Activated CD4-positive, alpha-beta memory T cell treated with anti-CD3 and anti-CD28 coated beads for 36 hours (primary cell): ENCODE measurements at regions of chr1 and their contacts with region 1.

Region 1: DNA sequence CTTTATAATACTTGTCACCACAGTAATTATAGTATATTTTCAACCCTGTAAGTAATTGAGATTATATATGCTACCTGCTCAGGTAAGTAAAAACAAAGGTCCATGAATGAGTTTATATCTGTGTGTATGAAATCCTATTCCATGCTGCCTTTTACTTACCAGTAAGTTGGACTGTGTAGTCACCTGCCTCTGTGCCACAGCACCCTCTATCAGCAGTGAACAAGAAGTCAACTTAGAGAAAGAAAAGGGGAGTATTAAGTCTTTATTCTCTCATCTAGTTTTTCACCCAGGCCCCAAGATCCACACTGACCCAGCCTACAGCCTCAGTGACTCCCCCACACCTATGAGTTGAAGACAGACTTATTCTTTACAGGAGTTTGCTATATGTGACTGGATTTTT is 36.9 kb upstream of the IFI16 start:
- DNase-seq: peak; percentile 37
- H3K4me3 Mint-ChIP-seq: no peak overlapping the region
- H3K27ac Mint-ChIP-seq: no peak overlapping the region
- H3K4me1 Mint-ChIP-seq: peaks cover 43% of the 10 kb centered on the region
- H3K27me3 Mint-ChIP-seq: no peaks in the 10 kb centered on the region

Region 2: GRCh38 chr1:158728510-158729225 is 244.2 kb before region 1 on chr1:
- CTCF ChIA-PET with region 1: no interaction called
- POLR2A ChIA-PET with region 1: no interaction called
- intact Hi-C with region 1: no loop called
- DNase-seq: no peak
- H3K4me3 Mint-ChIP-seq: no peak overlapping the region
- H3K27ac Mint-ChIP-seq: no peak overlapping the region
- H3K4me1 Mint-ChIP-seq: no peaks in the 10 kb centered on the region
- H3K27me3 Mint-ChIP-seq: peaks cover 15% of the 10 kb centered on the region

Region 3: GRCh38 chr1:158819461-158820443 is 153.1 kb before region 1 on chr1:
- CTCF ChIA-PET with region 1: no interaction called
- POLR2A ChIA-PET with region 1: no interaction called
- intact Hi-C with region 1: loop called (anchors 1 kb)
- DNase-seq: peak; percentile 40
- H3K4me3 Mint-ChIP-seq: peak overlapping the region; percentile 46
- H3K27ac Mint-ChIP-seq: peak overlapping the region; percentile 71
- H3K4me1 Mint-ChIP-seq: peaks cover 22% of the 10 kb centered on the region
- H3K27me3 Mint-ChIP-seq: peaks cover 2% of the 10 kb centered on the region

Region 4: DNA sequence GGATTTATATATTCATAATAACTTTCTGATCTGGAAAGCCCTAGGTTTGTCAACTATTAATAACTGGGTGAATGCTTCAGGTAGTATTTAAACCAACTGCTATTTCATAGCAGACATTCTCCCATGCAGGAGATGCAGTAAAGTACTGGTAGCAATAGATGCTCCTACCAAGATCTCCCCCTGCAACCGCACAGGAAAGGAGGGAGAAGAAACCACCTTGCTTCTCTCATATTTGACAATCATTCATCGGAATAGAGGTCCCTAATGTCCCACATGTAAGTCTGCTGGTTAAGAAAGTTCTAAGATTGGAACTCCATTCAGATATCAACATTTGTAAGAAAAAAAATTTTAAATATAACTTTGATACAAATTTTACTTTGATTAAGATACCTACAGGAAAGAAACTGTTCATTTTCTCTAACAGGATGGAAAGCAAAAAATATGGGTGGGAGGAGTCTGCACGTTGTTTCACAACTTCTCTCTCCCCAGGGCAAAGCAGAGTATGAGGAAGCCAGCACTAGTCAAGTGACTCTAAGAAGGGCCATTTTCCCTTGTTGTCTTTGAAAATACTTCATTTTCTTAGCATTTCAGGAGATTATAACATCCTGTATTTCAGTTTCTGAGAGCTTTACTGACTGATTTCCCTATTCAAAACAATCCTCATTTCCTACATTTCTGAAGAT is 41.6 kb before region 1 on chr1 and contains the start of gene PYHIN1:
- CTCF ChIA-PET with region 1: no interaction called
- POLR2A ChIA-PET with region 1: no interaction called
- intact Hi-C with region 1: loop called (anchors 1 kb)
- DNase-seq: peak; percentile 46
- H3K4me3 Mint-ChIP-seq: peak within 1 kb of the TSS; percentile 83
- H3K27ac Mint-ChIP-seq: peak within 1 kb of the TSS; percentile 84
- H3K4me1 Mint-ChIP-seq: peaks cover 50% of the 10 kb centered on the region
- H3K27me3 Mint-ChIP-seq: no peaks in the 10 kb centered on the region
- total RNA-seq, gene PYHIN1: 12.2 to 13.1 TPM

Region 5: GRCh38 chr1:158961178-158961577 is 11.7 kb before region 1 on chr1:
- CTCF ChIA-PET with region 1: no interaction called
- POLR2A ChIA-PET with region 1: no interaction called
- intact Hi-C with region 1: no loop called
- DNase-seq: no peak
- H3K4me3 Mint-ChIP-seq: no peak overlapping the region
- H3K27ac Mint-ChIP-seq: no peak overlapping the region
- H3K4me1 Mint-ChIP-seq: peaks cover 11% of the 10 kb centered on the region
- H3K27me3 Mint-ChIP-seq: no peaks in the 10 kb centered on the region

Region 6: GRCh38 chr1:158983225-158983624 is 10.4 kb after region 1 on chr1:
- CTCF ChIA-PET with region 1: no interaction called
- POLR2A ChIA-PET with region 1: no interaction called
- intact Hi-C with region 1: no loop called
- DNase-seq: no peak
- H3K4me3 Mint-ChIP-seq: no peak overlapping the region
- H3K27ac Mint-ChIP-seq: no peak overlapping the region
- H3K4me1 Mint-ChIP-seq: peaks cover 4% of the 10 kb centered on the region
- H3K27me3 Mint-ChIP-seq: no peaks in the 10 kb centered on the region

Region 7: GRCh38 chr1:159009704-159010361 is 37.0 kb after region 1 on chr1 and contains the start of gene IFI16:
- CTCF ChIA-PET with region 1: no interaction called
- POLR2A ChIA-PET with region 1: interaction called, 8 read pairs
- intact Hi-C with region 1: loop called (anchors 1 kb)
- DNase-seq: peak; percentile 77
- H3K4me3 Mint-ChIP-seq: peak within 1 kb of the TSS; percentile 90
- H3K27ac Mint-ChIP-seq: peak within 1 kb of the TSS; percentile 100
- H3K4me1 Mint-ChIP-seq: peaks cover 51% of the 10 kb centered on the region
- H3K27me3 Mint-ChIP-seq: no peaks in the 10 kb centered on the region
- total RNA-seq, gene IFI16: 215 to 220 TPM

Region 8: DNA sequence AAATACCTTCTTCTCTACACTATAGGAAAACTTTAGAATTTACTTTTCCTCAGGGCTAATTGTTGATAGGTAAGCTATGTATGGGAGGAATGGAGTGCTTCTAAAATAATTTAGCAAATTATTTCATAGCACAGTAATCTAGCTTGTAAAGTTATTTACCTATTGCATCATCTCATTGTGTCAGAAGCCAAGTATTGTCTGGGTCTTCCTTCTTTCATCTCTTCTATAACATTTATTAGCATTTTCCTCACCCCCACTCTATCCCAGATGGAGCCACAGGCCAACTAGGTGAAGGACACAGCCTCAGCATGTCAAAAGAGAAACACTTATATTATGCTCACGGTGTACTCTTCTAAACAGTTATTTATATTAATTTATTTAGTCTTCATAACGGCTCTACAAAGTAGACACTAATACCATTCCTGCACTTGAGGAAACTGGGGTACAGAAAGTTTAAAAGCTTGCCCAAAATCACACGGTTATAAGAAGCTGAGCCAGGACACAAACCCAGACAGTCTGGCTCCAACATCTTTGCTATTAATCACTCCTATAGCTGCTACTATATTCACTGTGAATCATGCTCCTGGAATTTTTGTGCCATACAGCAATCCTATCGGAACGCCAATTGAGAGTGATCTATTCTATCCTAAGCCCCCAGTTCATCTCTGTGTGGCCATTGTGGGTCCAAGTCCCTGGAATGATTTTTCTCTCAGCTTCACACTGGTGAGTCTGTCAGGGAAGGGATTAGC is 519.9 kb after region 1 on chr1:
- CTCF ChIA-PET with region 1: no interaction called
- POLR2A ChIA-PET with region 1: no interaction called
- intact Hi-C with region 1: no loop called
- DNase-seq: no peak
- H3K4me3 Mint-ChIP-seq: no peak overlapping the region
- H3K27ac Mint-ChIP-seq: no peak overlapping the region
- H3K4me1 Mint-ChIP-seq: no peaks in the 10 kb centered on the region
- H3K27me3 Mint-ChIP-seq: no peaks in the 10 kb centered on the region